ENCODE measurements at regions of chr15 and their contacts with region 1.

Region 1: GRCh38 chr15:31338879-31339557 is 12.4 kb downstream of the KLF13 start:
- DNase-seq: peak; percentile 80
- ATAC-seq: peak; percentile 63

Region 2: GRCh38 chr15:31391687-31392671 is 53.0 kb after region 1 on chr15:
- intact Hi-C with region 1: loop called (anchors 10 kb)
- DNase-seq: peak; percentile 95
- ATAC-seq: peak; percentile 83

Region 3: GRCh38 chr15:31473385-31474058 is 134.5 kb after region 1 on chr15:
- intact Hi-C with region 1: no loop called
- DNase-seq: no peak
- ATAC-seq: no peak

Measured in left ventricle myocardium superior (tissue), 1 donor.